B cell (primary cell): ENCODE measurements at regions of chr1 and their contacts with region 1.

Region 1: GRCh38 chr1:206935491-206936067 is 10.7 kb downstream of the PIGR start:
- DNase-seq: peak; percentile 59
- ATAC-seq: peak; percentile 14
- H3K4me3 ChIP-seq: no peak overlapping the region
- H3K4me3 Mint-ChIP-seq: no peak overlapping the region
- H3K27ac ChIP-seq: no peak overlapping the region
- H3K27ac Mint-ChIP-seq: no peak overlapping the region
- H3K4me1 ChIP-seq: peaks cover 27 to 30% of the 10 kb centered on the region in 2 donors
- H3K4me1 Mint-ChIP-seq: peaks cover 30% of the 10 kb centered on the region
- H3K27me3 ChIP-seq: no peaks in the 10 kb centered on the region
- H3K27me3 Mint-ChIP-seq: no peaks in the 10 kb centered on the region
- CTCF ChIP-seq: peak; percentile 51

Region 2: DNA sequence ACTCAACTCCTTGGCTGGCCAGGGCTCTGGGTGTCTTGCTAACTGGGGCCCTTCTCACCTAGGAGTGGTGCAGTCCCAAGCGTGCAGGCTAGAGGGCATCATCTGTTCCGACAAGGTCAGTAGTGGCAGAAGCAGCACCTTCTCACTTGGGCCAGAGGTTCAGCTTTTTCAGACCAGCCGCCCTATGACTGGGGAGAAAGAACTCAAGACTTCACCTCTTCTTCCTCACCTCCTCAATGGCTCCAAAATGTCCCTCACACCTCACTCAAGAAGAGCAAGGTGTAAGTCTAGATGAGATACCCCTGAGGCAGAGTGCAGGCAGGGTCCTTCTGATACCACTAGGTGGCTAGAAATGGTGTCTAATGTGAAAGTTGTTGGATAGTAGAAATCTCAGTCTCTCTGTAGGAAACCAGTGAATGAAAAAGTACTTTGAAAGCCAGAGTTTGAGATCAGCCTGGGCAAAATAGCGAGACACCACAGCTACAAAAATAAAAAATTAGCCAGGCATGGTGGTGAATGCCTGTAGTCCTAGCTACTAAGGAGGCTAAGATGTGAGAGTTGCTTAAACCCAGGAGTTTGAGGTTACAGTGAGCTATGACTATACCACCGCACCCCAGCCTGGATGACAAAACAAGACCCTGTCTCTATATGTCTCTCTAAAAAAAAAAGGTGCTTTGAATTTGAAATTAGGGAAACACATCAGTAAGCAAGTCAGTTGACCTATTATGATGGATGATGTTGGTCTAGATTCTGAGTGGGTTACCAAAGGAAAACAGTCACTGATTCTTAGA is 78.7 kb before region 1 on chr1:
- CTCF ChIA-PET with region 1: interaction called, 6 read pairs
- POLR2A ChIA-PET with region 1: no interaction called
- intact Hi-C with region 1: loop called (anchors 2 kb)
- DNase-seq: peak; percentile 43
- ATAC-seq: peak; percentile 61
- H3K4me3 ChIP-seq: no peak overlapping the region
- H3K4me3 Mint-ChIP-seq: no peak overlapping the region
- H3K27ac ChIP-seq: no peak overlapping the region
- H3K27ac Mint-ChIP-seq: no peak overlapping the region
- H3K4me1 ChIP-seq: no peaks in the 10 kb centered on the region
- H3K4me1 Mint-ChIP-seq: peaks cover 4% of the 10 kb centered on the region
- H3K27me3 ChIP-seq: peaks cover 0 to 4% (median 0%) of the 10 kb centered on the region in 4 experiments
- H3K27me3 Mint-ChIP-seq: peaks cover 18% of the 10 kb centered on the region
- CTCF ChIP-seq: peak; percentile 61

Region 3: DNA sequence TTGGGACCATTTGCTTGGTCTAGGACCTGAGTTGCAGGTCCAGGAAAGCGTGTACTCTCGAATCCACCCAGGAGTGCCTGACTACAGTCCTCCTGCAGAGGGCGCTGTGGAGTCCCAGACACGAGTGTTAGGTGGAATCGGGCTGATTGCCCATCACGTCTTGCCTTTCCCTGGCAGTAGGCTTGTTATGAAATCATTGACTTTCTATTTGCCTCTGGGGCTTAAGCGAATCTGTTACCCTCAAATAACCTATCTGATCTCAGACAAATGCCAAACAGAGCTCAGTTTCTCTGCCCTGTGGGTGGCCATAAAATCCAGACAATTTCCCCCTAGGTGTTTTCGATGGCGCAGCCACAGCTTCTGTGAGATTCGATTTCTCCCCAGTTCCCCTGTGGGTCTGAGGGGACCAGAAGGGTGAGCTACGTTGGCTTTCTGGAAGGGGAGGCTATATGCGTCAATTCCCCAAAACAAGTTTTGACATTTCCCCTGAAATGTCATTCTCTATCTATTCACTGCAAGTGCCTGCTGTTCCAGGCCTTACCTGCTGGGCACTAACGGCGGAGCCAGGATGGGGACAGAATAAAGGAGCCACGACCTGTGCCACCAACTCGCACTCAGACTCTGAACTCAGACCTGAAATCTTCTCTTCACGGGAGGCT is 70.4 kb before region 1 on chr1 and contains the start of gene IL20:
- CTCF ChIA-PET with region 1: interaction called, 21 read pairs
- POLR2A ChIA-PET with region 1: no interaction called
- intact Hi-C with region 1: loop called (anchors 1 kb)
- DNase-seq: peak; percentile 82
- ATAC-seq: peak; percentile 80
- H3K4me3 ChIP-seq: no peak within 1 kb of the TSS
- H3K4me3 Mint-ChIP-seq: no peak within 1 kb of the TSS
- H3K27ac ChIP-seq: no peak within 1 kb of the TSS
- H3K27ac Mint-ChIP-seq: peak within 1 kb of the TSS; percentile 43
- H3K4me1 ChIP-seq: no peaks in the 10 kb centered on the region
- H3K4me1 Mint-ChIP-seq: peaks cover 7% of the 10 kb centered on the region
- H3K27me3 ChIP-seq: peaks cover 0 to 4% (median 0%) of the 10 kb centered on the region in 4 experiments
- H3K27me3 Mint-ChIP-seq: peaks cover 16% of the 10 kb centered on the region
- CTCF ChIP-seq: peak; percentile 97
- total RNA-seq, gene IL20: not detected in 2 replicates

Region 4: DNA sequence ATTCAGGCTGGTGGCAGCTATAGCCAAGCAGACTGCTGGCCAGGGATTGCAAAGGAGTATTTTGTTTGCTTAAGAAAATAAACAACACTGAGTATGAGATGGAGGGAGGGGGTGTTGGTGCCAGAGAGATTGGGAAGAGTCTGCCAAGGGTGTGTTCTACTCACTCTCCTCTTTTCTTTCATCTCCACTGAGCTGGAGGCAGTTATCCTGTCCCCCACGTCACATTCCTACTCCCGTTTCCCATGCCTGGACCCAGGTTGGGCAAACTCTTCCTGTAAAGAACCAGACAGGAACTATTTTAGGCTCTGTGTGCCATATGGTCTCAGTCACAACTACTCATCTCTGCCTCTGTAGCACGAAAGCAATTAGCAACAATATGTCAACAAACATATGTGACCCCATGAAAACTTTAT is 39.7 kb before region 1 on chr1:
- CTCF ChIA-PET with region 1: interaction called, 208 read pairs
- POLR2A ChIA-PET with region 1: no interaction called
- intact Hi-C with region 1: loop called (anchors 5 kb)
- DNase-seq: no peak
- ATAC-seq: no peak
- H3K4me3 ChIP-seq: no peak overlapping the region
- H3K4me3 Mint-ChIP-seq: no peak overlapping the region
- H3K27ac ChIP-seq: no peak overlapping the region
- H3K27ac Mint-ChIP-seq: no peak overlapping the region
- H3K4me1 ChIP-seq: peaks cover 4 to 5% of the 10 kb centered on the region in 2 donors
- H3K4me1 Mint-ChIP-seq: peaks cover 24% of the 10 kb centered on the region
- H3K27me3 ChIP-seq: no peaks in the 10 kb centered on the region
- H3K27me3 Mint-ChIP-seq: no peaks in the 10 kb centered on the region
- CTCF ChIP-seq: no peak

Region 5: DNA sequence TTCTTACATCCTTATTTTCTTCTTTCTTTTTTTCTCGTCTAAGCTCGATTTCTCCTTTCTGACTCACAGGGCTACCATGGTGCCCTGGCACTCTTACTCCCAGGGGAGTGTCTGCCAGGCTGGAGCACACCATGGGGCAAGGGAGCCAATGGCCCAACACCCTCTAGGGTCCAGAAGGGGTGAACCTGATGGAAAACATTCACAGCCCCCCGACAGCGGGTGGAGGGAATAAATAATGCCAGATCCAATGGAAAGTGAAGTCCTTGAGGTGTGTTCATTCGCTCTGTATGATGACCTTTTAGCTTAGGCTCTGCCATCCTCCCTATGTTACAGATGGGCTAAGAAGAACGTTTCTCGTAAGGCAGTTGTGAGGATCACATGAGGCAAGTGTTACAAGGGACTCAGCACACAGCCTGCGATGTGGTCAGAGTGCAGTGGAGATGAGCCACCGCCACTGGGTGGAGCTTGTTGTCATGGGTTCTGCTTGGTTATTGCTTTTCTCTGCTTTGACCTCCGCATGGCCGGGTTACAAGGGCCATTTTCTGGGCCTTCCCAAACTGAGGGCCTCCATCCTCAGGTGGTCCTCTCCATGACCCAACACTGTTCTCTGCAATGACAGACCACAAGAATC is 10.4 kb before region 1 on chr1:
- CTCF ChIA-PET with region 1: interaction called, 723 read pairs
- POLR2A ChIA-PET with region 1: interaction called, 81 read pairs
- intact Hi-C with region 1: loop called (anchors 1 kb)
- DNase-seq: peak; percentile 84
- ATAC-seq: peak; percentile 53
- H3K4me3 ChIP-seq: peak overlapping the region in 1 of 5 experiments; percentile 17
- H3K4me3 Mint-ChIP-seq: no peak overlapping the region
- H3K27ac ChIP-seq: peak overlapping the region; percentile 88 to 96
- H3K27ac Mint-ChIP-seq: no peak overlapping the region
- H3K4me1 ChIP-seq: peaks cover 82 to 84% of the 10 kb centered on the region in 2 donors
- H3K4me1 Mint-ChIP-seq: peaks cover 37% of the 10 kb centered on the region
- H3K27me3 ChIP-seq: no peaks in the 10 kb centered on the region
- H3K27me3 Mint-ChIP-seq: no peaks in the 10 kb centered on the region
- CTCF ChIP-seq: peak; percentile 19

Region 6: DNA sequence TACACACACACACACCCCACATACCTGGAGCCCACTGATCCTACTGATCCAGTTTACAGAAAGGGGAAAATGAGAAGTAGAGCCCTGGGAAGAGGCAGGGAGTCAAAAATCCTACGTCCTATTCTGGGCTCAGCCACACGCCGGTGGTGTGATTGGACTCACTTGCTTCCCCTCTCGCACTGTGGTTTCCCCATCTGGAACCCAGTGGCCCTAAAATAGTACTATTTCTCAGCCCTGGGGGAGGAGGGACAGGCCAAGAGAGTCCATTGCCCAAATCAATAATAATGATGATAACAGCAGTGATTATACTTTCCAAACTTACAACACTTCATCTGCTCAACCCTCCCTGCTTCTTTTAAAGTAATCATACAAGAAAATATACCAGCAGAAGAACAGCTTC is 13.6 kb after region 1 on chr1:
- CTCF ChIA-PET with region 1: interaction called, 39 read pairs
- POLR2A ChIA-PET with region 1: no interaction called
- intact Hi-C with region 1: no loop called
- DNase-seq: no peak
- ATAC-seq: no peak
- H3K4me3 ChIP-seq: no peak overlapping the region
- H3K4me3 Mint-ChIP-seq: no peak overlapping the region
- H3K27ac ChIP-seq: no peak overlapping the region
- H3K27ac Mint-ChIP-seq: no peak overlapping the region
- H3K4me1 ChIP-seq: peaks cover 11 to 12% of the 10 kb centered on the region in 2 donors
- H3K4me1 Mint-ChIP-seq: peaks cover 32% of the 10 kb centered on the region
- H3K27me3 ChIP-seq: peaks cover 0 to 5% (median 0%) of the 10 kb centered on the region in 4 experiments
- H3K27me3 Mint-ChIP-seq: peaks cover 8% of the 10 kb centered on the region
- CTCF ChIP-seq: no peak

Region 7: DNA sequence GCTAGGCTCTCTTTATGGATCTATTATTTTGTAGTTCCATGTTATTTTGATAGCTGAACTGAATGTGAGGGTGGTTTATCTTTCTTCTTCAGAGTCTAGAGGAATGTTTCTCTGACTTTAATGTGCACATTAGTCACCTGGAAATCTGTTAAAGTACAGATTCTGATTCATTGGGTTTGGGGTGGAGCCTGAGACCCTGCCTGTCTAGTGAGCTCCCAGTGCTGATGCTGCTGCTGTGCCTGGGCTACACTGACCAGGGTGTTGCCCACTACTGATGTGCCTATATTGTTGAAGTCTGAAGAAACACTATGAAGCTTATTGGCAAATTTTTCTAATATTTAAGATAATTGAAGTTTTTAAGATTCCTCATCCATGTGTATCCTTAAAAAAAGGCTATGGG is 852.2 kb after region 1 on chr1:
- CTCF ChIA-PET with region 1: no interaction called
- POLR2A ChIA-PET with region 1: no interaction called
- intact Hi-C with region 1: no loop called
- DNase-seq: no peak
- ATAC-seq: no peak
- H3K4me3 ChIP-seq: no peak overlapping the region
- H3K4me3 Mint-ChIP-seq: no peak overlapping the region
- H3K27ac ChIP-seq: no peak overlapping the region
- H3K27ac Mint-ChIP-seq: no peak overlapping the region
- H3K4me1 ChIP-seq: no peaks in the 10 kb centered on the region
- H3K4me1 Mint-ChIP-seq: no peaks in the 10 kb centered on the region
- H3K27me3 ChIP-seq: no peaks in the 10 kb centered on the region
- H3K27me3 Mint-ChIP-seq: no peaks in the 10 kb centered on the region
- CTCF ChIP-seq: no peak